ENCODE measurements at regions of chr3 and their contacts with region 1.

Region 1: DNA sequence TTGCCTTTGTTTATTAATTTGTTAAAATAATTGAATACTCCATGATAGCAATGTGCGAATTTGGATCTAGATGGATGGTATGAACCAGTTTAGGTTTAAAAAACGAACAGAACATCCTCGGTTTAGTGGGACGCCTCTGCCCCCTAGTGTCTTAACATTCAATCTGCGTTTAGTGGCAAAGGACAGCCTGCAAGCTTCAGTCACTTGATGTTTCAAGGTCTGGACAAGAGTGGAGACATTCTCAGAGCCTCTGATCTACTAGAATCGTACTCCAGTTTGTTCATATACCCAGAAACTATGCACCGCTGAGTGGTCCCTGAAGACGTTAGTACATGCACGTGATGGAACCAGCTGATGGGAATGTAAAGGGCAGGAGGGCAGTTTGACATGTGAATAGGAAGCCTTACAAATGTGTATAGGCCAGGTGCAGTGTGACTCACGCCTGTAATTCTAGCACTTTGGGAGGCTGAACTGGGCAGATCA is 17.8 kb upstream of the ATP13A4 start:
- DNase-seq: peak in 1 of 3 donors; percentile 68
- ATAC-seq: peak; percentile 86
- H3K4me3 ChIP-seq: no peak overlapping the region
- H3K4me1 ChIP-seq: no peaks in the 10 kb centered on the region
- CTCF ChIP-seq: peak; percentile 38

Region 2: GRCh38 chr3:192566706-192567290 is 1005.7 kb before region 1 on chr3:
- intact Hi-C with region 1: loop called in 1 of 2 experiments (anchors 10 kb)
- DNase-seq: peak in 2 of 3 donors; percentile 30 to 84
- ATAC-seq: peak; percentile 73
- H3K4me3 ChIP-seq: no peak overlapping the region
- H3K4me1 ChIP-seq: no peaks in the 10 kb centered on the region
- CTCF ChIP-seq: no peak

Region 3: GRCh38 chr3:193040836-193041672 is 531.4 kb before region 1 on chr3:
- intact Hi-C with region 1: loop called in 1 of 2 experiments (anchors 10 kb)
- DNase-seq: peak in 1 of 3 donors; percentile 4
- ATAC-seq: peak; percentile 57
- H3K4me3 ChIP-seq: no peak overlapping the region
- H3K4me1 ChIP-seq: no peaks in the 10 kb centered on the region
- CTCF ChIP-seq: peak; percentile 15

Region 4: GRCh38 chr3:193744822-193745684 is 172.6 kb after region 1 on chr3:
- intact Hi-C with region 1: no loop called
- DNase-seq: no peak
- ATAC-seq: no peak
- H3K4me3 ChIP-seq: no peak overlapping the region
- H3K4me1 ChIP-seq: peaks cover 5% of the 10 kb centered on the region
- CTCF ChIP-seq: no peak